CD4-positive, alpha-beta T cell (primary cell): ENCODE measurements at regions of chr6 and their contacts with region 1.

Region 1: GRCh38 chr6:130575971-130576370 is 210.2 kb downstream of the TMEM200A start:
- DNase-seq: peak; percentile 5 to 86 (median 30)
- ATAC-seq: peak; percentile 93
- H3K4me3 ChIP-seq: peak overlapping the region; percentile 18
- H3K4me3 Mint-ChIP-seq: peak overlapping the region; percentile 49
- H3K27ac ChIP-seq: peak overlapping the region in 1 of 2 donors; percentile 14
- H3K27ac Mint-ChIP-seq: peak overlapping the region; percentile 37
- H3K4me1 ChIP-seq: peaks cover 25% of the 10 kb centered on the region
- H3K4me1 Mint-ChIP-seq: peaks cover 54% of the 10 kb centered on the region
- H3K27me3 ChIP-seq: no peaks in the 10 kb centered on the region
- H3K27me3 Mint-ChIP-seq: no peaks in the 10 kb centered on the region
- CTCF ChIP-seq: no peak

Region 2: DNA sequence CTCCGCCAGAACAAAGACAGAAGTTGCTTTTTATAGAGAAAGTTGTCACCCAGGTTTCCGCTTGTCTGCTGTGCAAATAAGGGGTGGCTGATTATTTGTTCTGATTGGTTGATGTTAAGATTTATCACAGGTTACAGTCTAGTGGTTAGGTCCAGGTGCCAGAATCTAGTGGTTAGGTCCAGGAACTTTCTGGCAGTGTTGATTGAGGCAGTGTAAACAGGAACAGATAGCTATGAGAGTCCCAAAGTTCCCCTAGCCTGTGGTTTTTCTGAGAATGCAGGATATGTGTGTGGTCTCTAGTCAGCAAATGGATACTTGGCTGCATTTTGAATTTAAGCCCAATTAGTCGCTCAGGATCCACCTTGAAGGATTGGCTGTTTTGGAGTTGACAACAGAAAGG is 62.2 kb before region 1 on chr6:
- CTCF ChIA-PET with region 1: no interaction called
- POLR2A ChIA-PET with region 1: interaction called, 5 read pairs
- intact Hi-C with region 1: loop called in 1 of 2 experiments (anchors 5 kb)
- DNase-seq: peak in 11 of 14 experiments; percentile 3 to 93 (median 25)
- ATAC-seq: peak; percentile 89
- H3K4me3 ChIP-seq: no peak overlapping the region
- H3K4me3 Mint-ChIP-seq: peak overlapping the region; percentile 59
- H3K27ac ChIP-seq: peak overlapping the region; percentile 10 to 49
- H3K27ac Mint-ChIP-seq: peak overlapping the region; percentile 87
- H3K4me1 ChIP-seq: peaks cover 27% of the 10 kb centered on the region
- H3K4me1 Mint-ChIP-seq: peaks cover 73% of the 10 kb centered on the region
- H3K27me3 ChIP-seq: no peaks in the 10 kb centered on the region
- H3K27me3 Mint-ChIP-seq: no peaks in the 10 kb centered on the region
- CTCF ChIP-seq: no peak

Region 3: GRCh38 chr6:130525408-130525807 is 50.6 kb before region 1 on chr6:
- CTCF ChIA-PET with region 1: no interaction called
- POLR2A ChIA-PET with region 1: interaction called, 12 read pairs
- intact Hi-C with region 1: no loop called
- DNase-seq: peak in 3 of 14 experiments; percentile 12 to 56 (median 27)
- ATAC-seq: peak; percentile 59
- H3K4me3 ChIP-seq: no peak overlapping the region
- H3K4me3 Mint-ChIP-seq: peak overlapping the region; percentile 1
- H3K27ac ChIP-seq: peak overlapping the region; percentile 47 to 56
- H3K27ac Mint-ChIP-seq: peak overlapping the region; percentile 50
- H3K4me1 ChIP-seq: peaks cover 27% of the 10 kb centered on the region
- H3K4me1 Mint-ChIP-seq: peaks cover 47% of the 10 kb centered on the region
- H3K27me3 ChIP-seq: no peaks in the 10 kb centered on the region
- H3K27me3 Mint-ChIP-seq: no peaks in the 10 kb centered on the region
- CTCF ChIP-seq: no peak